GM10248 (cell line): ENCODE measurements at regions of chr1 and their contacts with region 1.

Region 1: DNA sequence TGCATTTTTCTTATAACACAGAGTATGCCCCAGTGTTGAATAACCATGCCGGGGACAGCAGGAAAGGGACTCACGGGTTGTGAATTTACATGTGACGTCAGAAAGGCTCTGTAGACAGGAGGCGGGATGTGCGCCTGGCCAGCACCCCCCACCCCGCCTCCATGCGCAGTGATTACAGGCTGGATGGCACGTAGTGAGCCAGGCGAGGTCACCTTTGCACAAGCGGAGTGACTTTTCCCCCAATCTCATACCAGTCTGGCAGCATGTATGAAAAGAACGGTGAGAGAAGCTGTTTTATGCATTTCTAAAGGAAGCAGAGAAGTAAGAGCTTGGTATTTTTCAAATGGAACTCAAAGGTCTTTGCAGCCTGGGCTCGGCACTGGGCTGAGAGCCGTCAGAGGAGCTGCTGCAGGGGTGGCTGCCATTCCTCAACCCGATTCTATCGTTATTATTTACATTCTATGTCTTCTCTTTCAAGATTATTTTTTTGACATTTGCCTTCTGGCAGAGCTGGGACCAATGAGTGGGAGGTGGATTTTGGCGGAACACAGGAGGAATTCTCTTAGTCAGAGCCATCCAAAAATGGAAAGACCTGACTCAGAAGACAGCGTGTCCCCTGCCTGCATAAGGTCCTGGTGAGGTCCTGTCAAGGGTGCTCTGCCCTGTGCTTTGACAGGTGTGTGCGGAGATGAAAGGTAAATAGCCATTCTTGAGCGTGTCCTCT is 115.6 kb upstream of the SLC45A1 start:
- DNase-seq: no peak
- CTCF ChIP-seq: no peak

Region 2: GRCh38 chr1:8154621-8155052 is 47.7 kb before region 1 on chr1:
- CTCF ChIA-PET with region 1: no interaction called
- POLR2A ChIA-PET with region 1: interaction called, 11 read pairs
- DNase-seq: no peak
- CTCF ChIP-seq: no peak

Region 3: DNA sequence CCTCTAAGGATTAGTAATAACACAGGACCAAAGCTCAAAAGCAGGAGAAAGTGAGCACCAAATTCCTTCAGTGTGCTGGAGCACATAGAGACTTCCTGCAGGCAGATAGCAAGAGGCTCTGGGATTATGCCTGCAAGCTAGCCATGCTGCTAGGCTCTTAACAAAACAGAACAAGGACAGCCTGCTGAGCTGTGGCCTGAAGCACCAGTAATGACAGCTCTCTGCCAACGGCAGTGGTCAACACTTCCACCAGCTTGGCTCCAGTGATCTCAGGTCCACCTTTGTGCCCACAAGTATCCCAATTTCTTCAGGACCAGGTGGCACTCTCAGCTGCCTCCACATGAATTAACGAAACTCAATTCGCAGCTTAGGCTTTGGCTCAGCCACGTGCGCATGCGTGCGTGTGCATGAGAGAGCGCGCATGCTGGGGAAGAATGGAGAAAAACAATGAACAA is 179.7 kb after region 1 on chr1:
- CTCF ChIA-PET with region 1: no interaction called
- POLR2A ChIA-PET with region 1: no interaction called
- DNase-seq: no peak
- CTCF ChIP-seq: no peak

Region 4: DNA sequence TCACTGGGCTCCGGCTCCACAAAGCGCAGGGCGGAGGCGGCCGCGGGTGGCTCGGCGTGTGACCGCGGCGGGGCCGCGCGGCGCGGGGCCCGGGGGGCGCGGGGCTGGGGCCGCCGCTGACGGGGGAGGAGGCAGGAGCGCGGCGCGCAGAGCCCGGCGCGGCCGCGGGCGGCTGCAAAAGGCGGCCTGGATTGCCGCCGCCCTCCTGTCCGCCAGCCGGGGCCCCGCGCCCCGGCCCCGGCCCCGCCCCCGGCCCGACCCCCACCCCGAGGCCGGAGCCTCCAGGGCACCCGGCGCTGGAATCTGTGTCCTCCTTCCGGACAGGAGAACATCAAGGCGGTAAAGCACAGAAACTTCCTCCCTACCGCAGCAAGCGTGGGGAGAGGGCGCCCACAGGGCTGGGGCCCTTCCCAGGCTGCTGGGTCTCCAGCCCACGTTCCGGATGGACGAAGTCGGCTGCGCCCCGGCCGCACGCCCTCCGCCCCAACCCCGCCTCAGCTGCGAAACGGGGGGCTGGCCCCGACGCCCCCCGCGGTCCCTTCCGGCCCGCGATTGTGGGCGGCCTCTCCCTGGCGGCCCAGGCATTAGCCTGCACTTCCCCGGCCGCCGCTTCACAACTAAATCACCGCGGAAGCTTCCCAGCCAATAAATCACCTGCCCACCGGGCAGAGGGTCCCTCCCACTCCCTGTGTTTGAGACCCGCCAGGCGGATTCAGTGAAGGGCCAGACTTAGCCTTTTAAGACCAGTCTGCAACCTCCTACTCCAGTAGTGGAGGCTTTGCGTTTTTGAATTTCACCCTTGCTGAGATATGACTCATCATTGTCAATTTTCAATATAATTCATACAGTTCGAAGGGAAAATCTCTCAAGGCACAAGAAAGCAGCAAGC is 221.6 kb after region 1 on chr1:
- CTCF ChIA-PET with region 1: no interaction called
- POLR2A ChIA-PET with region 1: no interaction called
- DNase-seq: peak; percentile 51
- CTCF ChIP-seq: no peak